HEK293 (cell line): ENCODE measurements at regions of chr5 and their contacts with region 1.

Region 1: DNA sequence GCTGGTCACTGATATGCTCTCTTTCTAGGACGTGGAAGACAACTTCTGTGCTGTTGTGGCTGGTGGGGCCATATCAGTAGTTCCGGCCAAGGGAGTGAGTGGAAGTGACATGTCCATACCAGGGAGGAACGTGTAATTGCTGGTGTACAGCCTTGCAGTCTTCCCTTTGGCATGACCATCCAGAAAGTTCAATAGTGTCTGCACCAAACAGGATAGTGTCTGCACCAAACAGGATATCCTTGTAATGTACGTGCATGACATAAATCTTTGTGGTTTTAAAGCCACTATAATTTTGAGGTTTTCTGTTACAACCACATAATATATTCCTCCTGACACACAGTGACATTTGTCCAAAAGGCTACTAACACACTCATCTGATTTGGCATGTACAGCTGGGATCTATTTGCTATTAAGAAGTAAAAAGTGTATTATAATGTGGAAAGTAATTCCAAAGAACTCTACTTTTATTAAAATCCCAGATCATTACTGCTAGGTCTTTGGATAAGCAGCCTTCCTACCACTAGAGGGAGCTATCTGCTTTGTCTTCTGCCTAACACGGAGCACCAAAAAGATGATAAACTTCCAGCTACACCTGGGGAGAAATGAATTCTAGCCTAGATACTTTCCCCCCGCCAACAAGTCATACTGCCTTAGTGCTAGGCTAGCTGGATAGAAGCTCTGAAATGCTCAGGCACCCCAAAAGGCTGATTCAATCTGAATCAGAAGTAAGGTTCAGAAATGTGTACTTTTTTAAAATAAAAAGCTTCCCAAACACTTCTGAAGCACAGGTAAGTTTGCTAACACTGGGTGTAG is 52.7 kb downstream of the RNF145 start:
- H3K4me3 ChIP-seq: no peak overlapping the region
- H3K27ac ChIP-seq: no peak overlapping the region
- H3K4me1 ChIP-seq: no peaks in the 10 kb centered on the region
- CTCF ChIP-seq: peak; percentile 54; the same call in 1 of the 2 replicates

Region 2: DNA sequence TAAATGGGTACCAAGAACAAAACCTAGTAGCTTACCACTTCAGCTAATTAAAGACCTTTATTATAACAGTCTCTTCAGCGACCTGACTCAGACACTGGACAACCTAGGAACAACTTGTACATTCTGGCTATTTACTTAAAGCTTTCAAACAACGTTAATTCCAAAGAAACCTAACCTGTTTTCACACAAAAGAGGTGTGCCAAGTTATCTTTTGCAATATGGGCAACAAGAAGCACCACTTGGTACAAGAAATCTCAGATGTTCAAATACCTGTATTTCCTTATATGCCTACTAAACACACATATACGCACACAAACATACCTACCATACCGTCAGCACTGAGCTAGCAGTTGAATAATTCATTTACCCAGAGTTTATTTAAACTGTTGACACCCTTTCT is 29.7 kb after region 1 on chr5:
- CTCF ChIA-PET with region 1: interaction called, 16 read pairs
- POLR2A ChIA-PET with region 1: interaction called, 4 read pairs
- H3K4me3 ChIP-seq: no peak overlapping the region
- H3K27ac ChIP-seq: no peak overlapping the region
- H3K4me1 ChIP-seq: peaks cover 20% of the 10 kb centered on the region
- CTCF ChIP-seq: no peak

Region 3: GRCh38 chr5:159286420-159287035 is 129.9 kb after region 1 on chr5:
- CTCF ChIA-PET with region 1: interaction called, 23 read pairs
- POLR2A ChIA-PET with region 1: no interaction called
- H3K4me3 ChIP-seq: no peak overlapping the region
- H3K27ac ChIP-seq: no peak overlapping the region
- H3K4me1 ChIP-seq: no peaks in the 10 kb centered on the region
- CTCF ChIP-seq: no peak

Region 4: DNA sequence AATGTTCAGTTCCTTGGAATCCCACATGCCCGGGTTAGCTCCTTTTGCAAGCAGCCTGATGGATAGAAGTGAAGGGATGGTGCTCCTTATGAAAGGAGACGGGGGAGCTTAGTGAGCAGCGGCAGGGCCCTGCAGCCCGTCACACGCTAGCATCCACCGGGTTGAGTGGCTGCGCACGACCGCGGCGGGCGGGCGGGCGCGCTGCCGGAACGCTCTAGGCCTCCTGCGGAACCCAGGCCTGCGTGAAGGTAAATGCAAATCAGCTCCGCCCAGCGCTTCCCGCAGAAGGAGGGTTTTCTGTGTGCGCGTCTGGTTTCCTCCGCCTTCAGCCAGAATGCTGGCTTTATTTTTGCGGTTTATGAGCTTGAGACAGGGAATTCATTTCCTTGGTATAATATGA is 153.9 kb after region 1 on chr5:
- CTCF ChIA-PET with region 1: interaction called, 68 read pairs
- POLR2A ChIA-PET with region 1: no interaction called
- H3K4me3 ChIP-seq: no peak overlapping the region
- H3K27ac ChIP-seq: no peak overlapping the region
- H3K4me1 ChIP-seq: no peaks in the 10 kb centered on the region
- CTCF ChIP-seq: no peak

Region 5: DNA sequence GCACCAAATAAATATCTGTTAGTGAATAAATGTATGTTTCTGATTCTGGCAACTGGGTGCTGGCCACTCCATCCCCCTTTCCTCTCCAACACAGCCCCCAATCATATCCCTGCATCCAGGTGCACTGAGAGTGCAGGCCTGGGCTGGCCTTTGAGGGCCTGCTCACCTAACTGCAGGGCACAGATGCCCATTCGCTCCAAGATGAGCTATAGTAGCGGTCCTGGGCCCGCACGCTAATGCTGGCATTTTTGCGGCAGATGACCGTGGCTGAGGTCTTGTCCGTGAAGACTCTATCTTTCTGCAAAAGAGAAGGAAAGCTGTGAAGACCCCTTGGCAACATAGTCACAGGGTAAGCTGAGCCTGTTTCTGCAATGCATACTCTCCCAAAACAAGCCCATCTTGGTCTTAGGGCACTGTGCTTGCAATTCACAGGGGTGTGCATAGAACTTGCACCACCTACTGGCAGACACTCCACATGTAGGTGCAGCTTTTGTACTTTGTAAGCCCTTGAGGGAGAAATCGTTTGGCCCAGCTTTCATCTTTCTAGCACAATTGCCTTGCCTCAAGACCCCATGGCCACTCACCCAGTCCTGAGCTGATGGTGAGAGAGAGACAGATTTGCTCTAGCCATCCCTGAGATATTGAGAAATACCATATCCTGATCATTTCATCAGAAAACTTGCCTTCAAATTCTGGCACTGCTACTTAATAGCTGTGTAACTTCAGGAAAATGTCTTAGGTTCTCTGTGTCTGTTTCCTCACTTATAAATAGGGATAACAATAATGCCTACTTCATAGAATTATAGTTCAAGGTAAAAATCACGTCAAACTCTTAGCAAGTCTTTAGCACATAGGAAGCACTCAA is 160.1 kb after region 1 on chr5:
- CTCF ChIA-PET with region 1: interaction called, 68 read pairs
- POLR2A ChIA-PET with region 1: interaction called, 3 read pairs
- H3K4me3 ChIP-seq: no peak overlapping the region
- H3K27ac ChIP-seq: no peak overlapping the region
- H3K4me1 ChIP-seq: no peaks in the 10 kb centered on the region
- CTCF ChIP-seq: peak; percentile 73